WTC11 (cell line): ENCODE measurements at regions of chr9 and their contacts with region 1.

Region 1: DNA sequence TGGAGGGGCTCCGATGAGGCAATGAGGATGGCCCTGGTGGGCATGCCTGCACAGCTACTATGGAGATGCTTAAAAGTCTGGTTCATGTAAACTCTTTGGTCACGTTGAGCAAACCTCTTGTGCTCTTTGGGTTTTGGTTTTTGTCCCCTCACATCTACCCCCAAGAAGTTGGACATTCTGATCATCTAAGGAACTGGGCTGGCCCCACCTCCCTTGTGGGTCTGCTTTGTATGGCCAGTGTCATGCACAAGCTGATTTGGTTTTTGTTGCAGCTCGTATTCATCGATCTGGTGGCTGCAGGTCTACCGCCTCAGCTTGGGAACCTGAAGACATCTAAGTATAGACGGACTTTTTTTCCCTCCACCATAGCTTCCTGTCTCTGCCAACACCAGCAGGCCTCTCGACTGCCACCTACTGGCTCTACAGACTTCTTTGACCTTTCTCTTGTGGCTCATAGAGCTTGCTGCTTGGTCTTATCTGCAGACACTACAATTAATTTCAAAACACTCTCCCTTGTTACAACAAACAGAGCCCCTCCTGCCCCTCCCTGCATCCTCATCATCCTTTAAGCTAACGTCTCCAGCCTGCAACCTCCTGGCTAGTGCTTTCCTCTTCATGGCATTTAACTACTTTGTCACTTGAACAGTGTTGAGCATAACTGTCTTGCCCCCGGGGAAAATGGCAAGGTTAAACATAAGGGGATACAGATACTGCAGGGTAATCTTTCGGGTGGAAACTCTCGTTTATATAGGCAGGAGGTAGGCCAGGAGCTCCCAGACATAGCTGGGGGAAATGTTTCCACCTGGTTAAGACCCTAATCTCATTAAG is 34.5 kb downstream of the TSTD2 start:
- DNase-seq: peak; percentile 69
- ATAC-seq: peak; percentile 90
- H3K4me3 Mint-ChIP-seq: no peak overlapping the region
- H3K27ac Mint-ChIP-seq: peak overlapping the region; percentile 75; the same call in 1 of the 2 replicates
- H3K4me1 Mint-ChIP-seq: peaks cover 4% of the 10 kb centered on the region
- H3K27me3 Mint-ChIP-seq: no peaks in the 10 kb centered on the region
- CTCF ChIP-seq: peak; percentile 81

Region 2: DNA sequence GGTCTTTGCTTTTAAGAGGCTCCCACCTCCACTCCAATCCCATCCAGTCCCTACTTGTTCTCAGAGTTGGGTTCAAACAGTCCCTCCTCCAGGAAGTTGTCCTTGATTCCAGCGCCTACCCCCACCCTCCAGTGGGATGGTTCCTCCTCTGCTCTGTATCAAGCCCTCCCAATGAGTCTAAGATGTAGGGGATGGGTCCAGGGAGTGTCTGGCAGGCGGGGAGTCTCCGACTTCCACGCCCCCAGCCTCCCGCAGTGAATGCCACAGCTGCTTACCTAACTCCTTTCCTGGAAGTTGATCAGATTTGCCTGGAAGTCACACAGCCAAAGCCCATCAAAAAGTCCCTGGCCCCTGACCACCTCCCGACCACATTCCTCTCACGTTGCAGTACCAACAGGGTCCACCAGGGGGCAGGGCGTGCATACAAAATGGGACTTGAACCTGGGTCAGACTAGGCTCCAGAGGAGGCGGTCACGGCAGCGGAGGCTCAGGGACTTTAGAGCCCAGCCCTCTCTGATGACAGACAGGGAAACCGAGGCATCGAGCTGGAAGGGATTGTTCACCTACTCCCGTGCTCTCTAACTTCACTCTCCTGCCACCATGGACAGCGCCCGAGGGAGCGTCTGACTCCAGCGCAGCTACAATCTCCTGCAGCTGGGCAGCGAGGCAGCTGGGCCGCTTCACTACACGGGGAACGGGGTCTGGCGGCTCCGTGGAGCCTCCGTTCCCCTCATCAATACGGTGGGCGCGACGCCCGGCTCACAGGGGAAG is 211.8 kb before region 1 on chr9:
- CTCF ChIA-PET with region 1: interaction called, 21 read pairs
- POLR2A ChIA-PET with region 1: no interaction called
- DNase-seq: peak; percentile 92
- ATAC-seq: peak; percentile 74
- H3K4me3 Mint-ChIP-seq: peak overlapping the region; percentile 41
- H3K27ac Mint-ChIP-seq: no peak overlapping the region
- H3K4me1 Mint-ChIP-seq: peaks cover 24% of the 10 kb centered on the region
- H3K27me3 Mint-ChIP-seq: peaks cover 11% of the 10 kb centered on the region
- CTCF ChIP-seq: peak; percentile 100

Region 3: DNA sequence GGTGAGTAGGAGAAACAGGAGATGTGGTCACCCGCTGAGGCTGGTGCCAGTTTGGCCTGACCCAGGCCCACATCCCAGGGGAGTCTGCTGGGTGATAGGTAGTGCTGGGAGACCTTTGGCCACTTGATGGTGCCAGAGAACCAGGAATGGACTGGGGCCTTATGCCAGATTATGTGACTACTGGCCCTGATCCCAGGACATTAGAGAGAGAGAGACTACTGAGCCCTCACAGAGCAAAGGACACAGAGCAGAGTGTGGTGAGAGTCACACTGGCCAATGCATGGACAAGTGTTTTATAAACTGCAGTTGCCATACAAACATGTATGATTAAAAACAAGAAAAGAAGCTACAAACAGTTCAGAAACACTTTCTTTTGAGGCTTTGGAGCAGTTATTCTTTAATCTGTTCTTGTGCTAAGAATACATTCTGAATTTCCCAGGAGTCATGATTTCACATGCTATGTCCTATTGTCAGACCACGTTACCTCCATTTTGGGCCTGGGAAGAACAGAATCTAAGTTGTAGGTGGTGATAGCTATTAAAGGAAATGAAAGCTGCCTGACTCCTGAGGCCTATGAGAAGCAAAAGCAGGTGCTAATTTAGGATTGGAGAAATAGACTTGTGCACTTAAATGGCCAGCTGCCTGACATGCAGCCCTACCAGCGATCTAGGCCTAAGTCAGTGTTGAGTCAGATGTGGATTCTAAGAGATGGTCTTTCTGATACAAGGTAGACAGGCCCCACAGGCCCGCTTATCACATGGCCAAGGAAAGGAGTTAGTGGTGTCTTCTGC is 129.8 kb before region 1 on chr9:
- CTCF ChIA-PET with region 1: interaction called, 112 read pairs
- POLR2A ChIA-PET with region 1: no interaction called
- DNase-seq: peak; percentile 77
- ATAC-seq: peak; percentile 100
- H3K4me3 Mint-ChIP-seq: no peak overlapping the region
- H3K27ac Mint-ChIP-seq: no peak overlapping the region
- H3K4me1 Mint-ChIP-seq: no peaks in the 10 kb centered on the region
- H3K27me3 Mint-ChIP-seq: no peaks in the 10 kb centered on the region
- CTCF ChIP-seq: peak; percentile 38; the same call in 1 of the 2 replicates

Region 4: DNA sequence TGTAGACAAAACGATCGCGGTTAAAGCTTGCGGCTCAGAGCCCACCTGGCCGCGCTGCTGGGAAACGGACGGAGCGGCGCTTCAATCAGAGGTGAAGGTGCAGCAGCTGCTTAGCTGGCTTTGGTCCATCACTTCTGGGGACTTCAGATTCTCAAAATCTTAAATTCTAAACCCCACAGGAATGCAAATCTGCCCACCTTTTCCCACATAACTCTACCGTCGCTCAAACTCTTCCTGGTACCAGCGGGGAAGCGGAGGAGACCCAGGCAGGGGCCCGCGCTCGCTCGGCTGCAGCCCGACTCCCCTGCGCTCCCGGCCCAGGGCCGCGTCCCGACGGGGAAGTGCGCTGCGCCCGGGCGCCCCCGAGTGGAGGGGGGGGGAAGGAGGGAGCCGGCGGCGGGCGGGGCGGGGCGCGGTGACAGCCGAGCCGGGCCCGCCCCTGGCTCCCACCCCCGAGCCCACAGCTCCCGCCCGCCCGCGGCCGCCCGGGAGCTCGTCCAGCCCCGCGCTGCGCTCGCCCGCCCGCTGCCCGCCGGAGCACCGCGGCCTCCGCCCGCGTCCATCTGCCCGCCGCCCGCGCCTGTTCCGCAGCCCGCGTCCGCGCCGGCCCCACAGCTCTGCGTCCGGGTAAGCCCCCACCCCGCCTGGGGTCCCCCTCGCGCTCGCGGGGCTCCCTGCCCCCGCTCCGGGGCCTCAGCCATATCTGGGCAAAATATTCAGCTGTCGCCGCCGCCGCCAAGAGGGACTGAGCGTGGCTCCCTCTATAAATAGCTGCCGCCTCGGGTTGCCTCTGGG is 97.3 kb before region 1 on chr9 and contains the start of gene TMOD1:
- CTCF ChIA-PET with region 1: interaction called, 77 read pairs
- POLR2A ChIA-PET with region 1: interaction called, 9 read pairs
- DNase-seq: peak; percentile 73
- ATAC-seq: peak; percentile 71
- H3K4me3 Mint-ChIP-seq: peak within 1 kb of the TSS; percentile 78
- H3K27ac Mint-ChIP-seq: no peak within 1 kb of the TSS
- H3K4me1 Mint-ChIP-seq: peaks cover 21% of the 10 kb centered on the region
- H3K27me3 Mint-ChIP-seq: peaks cover 40% of the 10 kb centered on the region
- CTCF ChIP-seq: no peak
- total RNA-seq, gene TMOD1: 1.0 to 1.6 TPM (median 1.4 TPM) in 3 replicates

Region 5: GRCh38 chr9:97557606-97558095 is 41.0 kb before region 1 on chr9:
- CTCF ChIA-PET with region 1: interaction called, 12 read pairs
- POLR2A ChIA-PET with region 1: no interaction called
- DNase-seq: no peak
- ATAC-seq: no peak
- H3K4me3 Mint-ChIP-seq: no peak overlapping the region
- H3K27ac Mint-ChIP-seq: no peak overlapping the region
- H3K4me1 Mint-ChIP-seq: peaks cover 23% of the 10 kb centered on the region
- H3K27me3 Mint-ChIP-seq: no peaks in the 10 kb centered on the region
- CTCF ChIP-seq: no peak

Region 6: GRCh38 chr9:97615439-97616072 is 16.9 kb after region 1 on chr9:
- CTCF ChIA-PET with region 1: interaction called, 45 read pairs
- POLR2A ChIA-PET with region 1: no interaction called
- DNase-seq: peak; percentile 64
- ATAC-seq: peak; percentile 51; the same call in 1 of the 2 replicates
- H3K4me3 Mint-ChIP-seq: no peak overlapping the region
- H3K27ac Mint-ChIP-seq: no peak overlapping the region
- H3K4me1 Mint-ChIP-seq: no peaks in the 10 kb centered on the region
- H3K27me3 Mint-ChIP-seq: no peaks in the 10 kb centered on the region
- CTCF ChIP-seq: peak; percentile 63